Astrocyte of the cerebellum (primary cell): ENCODE measurements at regions of chr2 and their contacts with region 1.

Region 1: DNA sequence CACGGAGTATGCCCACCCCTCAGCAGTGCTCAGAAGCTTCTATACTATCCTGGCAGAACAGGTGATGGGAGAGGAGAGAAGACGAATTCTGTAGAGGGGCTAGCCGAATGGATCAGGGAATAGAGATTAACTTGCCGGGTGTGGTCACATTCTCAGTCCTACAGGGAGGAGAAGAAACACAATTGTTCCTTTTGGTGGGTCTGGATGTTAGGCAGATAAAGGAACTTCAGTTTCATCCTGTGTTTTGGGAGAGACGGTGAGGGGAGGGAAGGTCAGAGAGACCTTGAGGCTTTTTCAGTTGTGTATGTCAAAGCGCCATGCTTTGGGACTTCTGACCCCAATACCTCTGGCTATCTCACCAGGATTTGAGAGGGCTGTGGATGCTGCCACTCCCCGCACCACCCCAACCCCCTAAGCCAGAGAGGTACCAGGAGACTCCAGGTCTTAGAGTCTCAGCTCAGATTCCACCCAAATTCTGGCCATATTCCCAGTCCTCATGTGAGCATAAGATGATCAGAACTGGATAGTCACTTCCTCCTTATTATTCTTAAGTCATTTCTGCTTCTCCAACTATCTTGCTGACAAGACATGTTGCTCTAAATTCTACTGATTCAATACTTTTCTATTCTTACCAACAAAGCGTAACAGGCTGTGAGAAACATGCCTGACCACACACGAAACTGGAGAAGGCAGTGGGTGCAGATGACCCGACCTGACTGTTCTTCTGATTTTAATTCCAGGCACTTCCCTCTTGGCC is 2.3 kb upstream of the TMEM37 start:
- DNase-seq: peak; percentile 12
- H3K4me3 ChIP-seq: no peak overlapping the region
- CTCF ChIP-seq: no peak

Region 2: GRCh38 chr2:119126650-119127049 is 302.8 kb before region 1 on chr2:
- in situ Hi-C with region 1: no loop called
- DNase-seq: no peak
- H3K4me3 ChIP-seq: no peak overlapping the region
- CTCF ChIP-seq: peak; percentile 32

Region 3: GRCh38 chr2:119531292-119531691 is 101.9 kb after region 1 on chr2:
- in situ Hi-C with region 1: loop called (anchors 10 kb)
- DNase-seq: no peak
- H3K4me3 ChIP-seq: no peak overlapping the region
- CTCF ChIP-seq: no peak